H1 (cell line): ENCODE measurements at regions of chr17 and their contacts with region 1.

Region 1: DNA sequence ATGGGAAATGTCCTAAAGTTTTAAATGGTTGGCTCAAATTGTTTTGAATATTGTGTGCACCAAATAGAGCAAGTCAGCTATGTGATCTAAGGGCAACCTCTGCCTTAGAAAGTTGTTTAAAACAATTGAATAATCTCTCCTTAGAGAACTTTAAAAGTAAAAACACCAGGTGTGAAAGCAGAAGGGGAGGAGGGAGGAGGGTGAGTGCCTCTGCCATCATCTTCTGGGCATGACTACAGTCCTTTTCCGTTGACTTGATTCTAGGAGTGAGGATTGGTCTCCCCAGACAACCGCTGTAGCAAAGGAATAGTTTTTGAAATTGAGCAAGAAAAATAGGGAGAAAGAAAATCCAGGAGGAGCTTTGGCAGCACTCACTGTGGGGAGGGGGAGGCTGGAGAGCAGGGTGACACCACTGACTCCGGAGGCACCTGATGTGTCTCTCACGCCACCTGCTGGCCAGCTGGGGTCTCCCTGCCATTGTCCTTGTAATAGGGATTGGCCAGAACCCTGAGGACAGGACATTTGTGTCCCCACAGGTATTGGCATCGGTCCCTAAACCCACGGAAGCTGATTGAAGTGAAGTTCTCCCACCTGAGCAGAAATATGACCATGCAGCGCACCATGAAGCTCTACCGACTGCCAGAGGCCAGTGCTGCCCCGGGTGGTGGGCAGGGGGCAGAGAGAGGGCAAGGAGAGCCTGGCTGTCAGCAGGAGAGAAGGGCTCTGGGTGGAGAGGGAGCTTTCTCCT is 33.3 kb downstream of the PLCD3 start:
- DNase-seq: peak; percentile 63 to 95
- H3K4me3 ChIP-seq: no peak overlapping the region
- H3K27ac ChIP-seq: no peak overlapping the region
- H3K4me1 ChIP-seq: no peaks in the 10 kb centered on the region; a peak in 1 of 7 replicates
- H3K27me3 ChIP-seq: no peaks in the 10 kb centered on the region
- CTCF ChIP-seq: peak; percentile 78 to 96 (median 95)
- EP300 ChIP-seq: no peak
- POLR2A ChIP-seq: no peak
- RAD21 ChIP-seq: peak; percentile 73 to 76

Region 2: DNA sequence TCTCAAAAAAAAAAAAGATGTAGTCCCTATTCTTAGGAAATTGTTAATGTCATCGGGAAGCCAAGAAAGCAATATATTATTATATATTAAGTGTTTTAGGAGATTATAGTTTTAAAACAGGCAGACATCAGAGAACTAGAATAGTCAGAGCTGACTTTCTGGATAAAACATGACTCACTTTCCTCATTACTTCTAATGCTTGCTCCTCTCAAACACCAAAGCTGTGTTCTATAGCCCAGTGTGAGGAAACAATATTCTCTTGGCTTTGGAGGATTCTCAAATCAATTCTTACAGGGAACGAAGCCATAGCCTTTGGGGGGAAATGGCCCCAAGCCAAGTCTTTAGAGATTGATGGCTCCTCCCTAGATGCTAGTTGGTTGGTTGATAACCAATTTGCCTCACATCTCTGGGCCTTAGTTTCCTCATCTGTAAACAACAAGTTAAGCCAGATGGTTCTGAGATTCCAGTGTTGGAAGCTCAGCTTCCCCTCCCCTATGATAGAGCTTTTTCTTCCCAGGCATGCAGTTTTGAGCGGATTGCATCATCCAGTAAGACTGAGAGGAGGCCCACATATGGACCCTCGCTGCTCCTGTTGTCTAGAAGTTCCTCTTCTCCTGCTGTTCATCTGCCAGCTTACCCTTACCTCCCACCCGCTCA is 25.5 kb before region 1 on chr17:
- CTCF ChIA-PET with region 1: interaction called, 13 read pairs
- POLR2A ChIA-PET with region 1: no interaction called
- DNase-seq: no peak
- H3K4me3 ChIP-seq: no peak overlapping the region
- H3K27ac ChIP-seq: no peak overlapping the region
- H3K4me1 ChIP-seq: no peaks in the 10 kb centered on the region
- H3K27me3 ChIP-seq: no peaks in the 10 kb centered on the region
- CTCF ChIP-seq: no peak
- EP300 ChIP-seq: no peak
- POLR2A ChIP-seq: no peak
- RAD21 ChIP-seq: no peak

Region 3: DNA sequence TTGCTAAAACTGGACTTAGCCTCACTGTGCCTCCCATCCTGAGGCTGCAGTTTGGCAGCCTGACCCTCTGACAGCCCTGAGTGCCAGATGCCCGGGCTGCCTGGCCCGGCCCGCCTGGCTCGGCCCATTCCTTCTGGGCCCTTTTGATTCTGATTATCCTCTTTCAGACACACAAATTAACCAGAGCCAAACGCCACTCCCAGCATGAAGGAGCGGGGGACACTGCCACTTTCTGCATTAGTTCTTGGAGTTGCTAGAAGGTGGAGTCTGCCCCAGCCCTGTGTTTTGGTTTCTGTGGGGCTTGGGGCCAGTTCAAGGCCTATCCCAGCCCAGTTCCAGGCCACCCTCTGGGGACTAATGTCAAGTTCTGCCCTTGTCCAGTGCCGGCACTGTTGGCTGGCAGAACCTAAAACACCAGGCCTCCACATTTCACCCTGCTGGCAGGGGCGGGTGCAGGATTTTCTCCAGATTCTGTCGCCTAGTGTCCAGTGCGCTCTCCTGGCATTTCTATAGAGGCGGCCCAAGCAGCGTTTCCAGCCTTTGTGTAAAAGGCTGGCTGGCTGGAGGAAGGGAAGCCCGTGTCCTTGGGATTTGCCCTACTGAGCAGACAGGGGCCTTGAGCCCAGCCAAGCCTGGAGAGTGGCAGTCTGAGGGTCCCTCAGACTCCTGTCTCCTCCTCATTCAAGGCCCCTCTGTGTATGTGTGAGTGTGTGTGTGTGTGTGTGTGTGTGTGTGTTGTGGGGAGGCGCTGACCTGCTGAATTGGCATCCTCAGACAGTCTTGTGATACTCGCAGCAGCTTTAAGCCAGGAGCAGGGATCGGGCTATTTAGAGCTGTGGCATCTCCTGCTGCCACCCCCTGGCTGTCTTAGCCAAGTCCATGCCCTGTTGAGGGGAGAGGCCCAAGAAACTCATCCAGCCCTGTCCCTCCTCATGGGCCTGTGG is 11.9 kb after region 1 on chr17:
- CTCF ChIA-PET with region 1: interaction called, 67 read pairs
- POLR2A ChIA-PET with region 1: interaction called, 7 read pairs
- DNase-seq: no peak
- H3K4me3 ChIP-seq: no peak overlapping the region
- H3K27ac ChIP-seq: no peak overlapping the region
- H3K4me1 ChIP-seq: peaks cover 0 to 9% (median 4%) of the 10 kb centered on the region in 4 experiments; a peak in 3 of 7 replicates
- H3K27me3 ChIP-seq: no peaks in the 10 kb centered on the region
- CTCF ChIP-seq: no peak
- EP300 ChIP-seq: no peak
- POLR2A ChIP-seq: no peak
- RAD21 ChIP-seq: no peak

Region 4: DNA sequence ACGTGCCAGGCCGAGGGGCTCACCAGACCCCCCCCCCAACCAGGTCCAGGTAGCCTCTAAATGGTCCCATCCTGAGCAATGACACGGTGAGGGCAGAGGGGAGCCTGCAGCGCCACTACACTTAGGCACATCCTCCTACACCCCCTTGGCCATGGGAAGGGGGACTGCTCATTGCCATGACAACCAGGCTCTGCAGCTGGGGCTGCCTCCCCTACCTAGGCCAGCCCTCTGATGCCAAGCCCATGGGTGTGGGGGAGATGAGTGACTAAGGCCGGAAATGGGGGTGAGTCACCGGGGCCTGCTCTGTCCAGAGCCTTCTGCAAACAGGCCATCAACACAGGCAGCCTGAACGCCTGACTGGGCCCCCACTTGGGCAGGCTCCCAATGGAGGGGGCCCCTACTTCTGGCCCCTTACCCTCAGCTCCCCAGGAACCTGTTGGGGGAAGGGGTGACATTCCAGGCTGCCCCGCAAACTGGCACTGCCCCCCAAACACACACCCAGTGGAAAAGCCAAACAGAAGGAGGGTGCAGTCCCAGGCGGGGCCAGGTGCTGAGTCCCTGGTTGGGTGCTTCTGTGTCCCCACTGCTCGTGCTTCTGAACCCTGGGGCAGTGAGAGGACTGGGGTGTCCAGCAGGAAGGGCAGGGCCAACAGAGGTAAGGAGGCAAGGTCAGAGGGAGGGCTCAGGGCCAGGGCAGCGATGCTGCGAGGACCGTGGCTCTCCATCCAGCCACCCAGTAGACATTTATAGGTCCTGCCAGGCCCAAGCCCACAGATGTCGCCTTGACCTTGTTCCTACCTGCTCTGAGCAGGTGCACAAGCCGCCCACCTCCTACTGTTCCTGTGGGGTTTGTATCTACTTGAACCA is 25.1 kb after region 1 on chr17:
- CTCF ChIA-PET with region 1: interaction called, 69 read pairs
- POLR2A ChIA-PET with region 1: interaction called, 4 read pairs
- DNase-seq: no peak
- H3K4me3 ChIP-seq: no peak overlapping the region
- H3K27ac ChIP-seq: no peak overlapping the region
- H3K4me1 ChIP-seq: peaks cover 0 to 18% (median 10%) of the 10 kb centered on the region in 4 experiments; a peak in 5 of 7 replicates
- H3K27me3 ChIP-seq: no peaks in the 10 kb centered on the region
- CTCF ChIP-seq: no peak
- EP300 ChIP-seq: no peak
- POLR2A ChIP-seq: no peak
- RAD21 ChIP-seq: no peak